IMR-90 (cell line): ENCODE measurements at regions of chr7 and their contacts with region 1.

Region 1: GRCh38 chr7:6290319-6290741 is 17.9 kb upstream of the CYTH3 start:
- DNase-seq: peak; percentile 18
- ATAC-seq: peak; percentile 37; the same call in 1 of the 2 replicates
- H3K4me3 ChIP-seq: no peak overlapping the region
- H3K27ac ChIP-seq: no peak overlapping the region
- H3K4me1 ChIP-seq: peaks cover 2% of the 10 kb centered on the region; the same call in 1 of the 2 replicates
- H3K27me3 ChIP-seq: no peaks in the 10 kb centered on the region
- CTCF ChIP-seq: no peak
- POLR2A ChIP-seq: no peak
- RAD21 ChIP-seq: no peak

Region 2: DNA sequence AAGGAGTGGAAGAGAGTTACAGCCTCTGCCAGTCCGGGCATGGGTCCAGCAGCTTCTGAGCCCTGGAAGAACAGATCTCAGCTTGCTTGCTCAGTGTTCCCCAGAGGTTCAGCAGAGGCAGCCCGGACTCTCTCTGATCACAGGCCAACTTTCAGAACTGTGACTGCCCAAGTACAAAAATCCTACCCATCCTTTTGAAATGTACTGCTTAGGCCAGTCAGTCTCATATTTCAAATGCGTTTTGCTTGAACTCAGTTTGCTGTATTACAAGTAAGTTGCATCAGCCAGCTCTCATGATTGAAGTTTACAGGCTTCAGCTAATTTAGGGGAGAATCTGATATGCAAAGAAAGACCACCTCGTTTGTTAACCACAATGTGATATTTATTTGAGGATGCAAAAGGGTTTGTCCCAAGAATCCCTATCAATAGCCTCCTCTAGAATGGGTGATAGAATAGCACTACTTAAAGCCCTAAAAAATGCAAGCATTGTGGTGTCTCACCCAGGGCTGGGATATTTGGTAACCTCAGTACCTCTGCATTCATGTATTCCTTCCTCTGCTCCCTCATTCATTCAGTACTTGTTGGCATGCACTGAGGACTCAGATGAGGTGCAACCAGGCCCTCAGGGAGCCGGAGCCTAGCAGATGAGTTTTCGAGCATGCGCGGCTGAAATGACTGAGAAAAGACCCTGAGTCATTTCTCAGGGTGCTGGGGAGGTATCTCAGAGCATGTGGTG is 274.2 kb before region 1 on chr7:
- CTCF ChIA-PET with region 1: no interaction called
- POLR2A ChIA-PET with region 1: no interaction called
- dilution Hi-C with region 1: no loop called
- in situ Hi-C with region 1: no loop called
- intact Hi-C with region 1: no loop called
- DNase-seq: peak; percentile 95
- ATAC-seq: peak; percentile 89
- H3K4me3 ChIP-seq: no peak overlapping the region
- H3K27ac ChIP-seq: peak overlapping the region; percentile 98
- H3K4me1 ChIP-seq: peaks cover 11% of the 10 kb centered on the region
- H3K27me3 ChIP-seq: no peaks in the 10 kb centered on the region
- CTCF ChIP-seq: no peak
- POLR2A ChIP-seq: no peak
- RAD21 ChIP-seq: no peak

Region 3: DNA sequence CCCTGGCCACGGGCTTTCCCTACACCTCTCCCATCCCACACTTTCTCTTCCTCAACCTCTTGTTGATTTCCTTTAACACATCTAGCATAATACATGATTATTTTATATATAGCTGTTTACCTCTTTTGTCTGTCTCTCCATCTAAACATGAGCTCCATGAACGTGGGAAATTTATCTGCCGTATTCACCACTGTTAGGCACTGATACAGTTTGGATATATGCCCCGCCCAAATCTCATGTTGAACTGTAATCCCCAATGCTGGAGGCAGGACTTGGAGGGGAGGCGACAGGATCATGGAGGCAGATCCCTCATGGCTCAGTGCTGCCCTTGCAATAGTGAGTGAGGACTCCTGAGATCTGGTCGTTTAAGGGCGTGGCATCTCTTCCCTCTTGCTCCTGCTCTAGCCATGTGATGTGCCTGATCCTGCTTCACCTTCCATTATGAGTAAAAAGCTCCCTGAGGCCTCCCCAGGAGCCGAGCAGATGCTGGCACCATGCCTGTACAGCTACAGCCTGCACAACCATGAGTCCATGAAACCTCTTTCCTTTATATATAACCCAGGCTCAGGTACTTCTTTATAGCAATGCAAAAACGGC is 23.5 kb before region 1 on chr7:
- CTCF ChIA-PET with region 1: no interaction called
- POLR2A ChIA-PET with region 1: interaction called, 25 read pairs
- dilution Hi-C with region 1: no loop called
- in situ Hi-C with region 1: no loop called
- intact Hi-C with region 1: no loop called
- DNase-seq: no peak
- ATAC-seq: no peak
- H3K4me3 ChIP-seq: no peak overlapping the region
- H3K27ac ChIP-seq: no peak overlapping the region
- H3K4me1 ChIP-seq: 0 out of 2 replicates have a peak, but pooled peaks cover 4% of the 10 kb centered on the region
- H3K27me3 ChIP-seq: no peaks in the 10 kb centered on the region
- CTCF ChIP-seq: no peak
- POLR2A ChIP-seq: no peak
- RAD21 ChIP-seq: no peak

Region 4: GRCh38 chr7:6385110-6385971 is 95.0 kb after region 1 on chr7:
- CTCF ChIA-PET with region 1: no interaction called
- POLR2A ChIA-PET with region 1: no interaction called
- dilution Hi-C with region 1: no loop called
- in situ Hi-C with region 1: no loop called
- intact Hi-C with region 1: no loop called
- DNase-seq: peak; percentile 97
- ATAC-seq: peak; percentile 89
- H3K4me3 ChIP-seq: no peak overlapping the region
- H3K27ac ChIP-seq: peak overlapping the region; percentile 42; the same call in 1 of the 2 replicates
- H3K4me1 ChIP-seq: peaks cover 17% of the 10 kb centered on the region
- H3K27me3 ChIP-seq: no peaks in the 10 kb centered on the region
- CTCF ChIP-seq: no peak
- POLR2A ChIP-seq: no peak
- RAD21 ChIP-seq: no peak

Region 5: GRCh38 chr7:6423942-6424701 is 133.8 kb after region 1 on chr7:
- CTCF ChIA-PET with region 1: no interaction called
- POLR2A ChIA-PET with region 1: no interaction called
- dilution Hi-C with region 1: no loop called
- in situ Hi-C with region 1: no loop called
- intact Hi-C with region 1: no loop called
- DNase-seq: no peak
- ATAC-seq: no peak
- H3K4me3 ChIP-seq: no peak overlapping the region
- H3K27ac ChIP-seq: no peak overlapping the region
- H3K4me1 ChIP-seq: no peaks in the 10 kb centered on the region
- H3K27me3 ChIP-seq: no peaks in the 10 kb centered on the region
- CTCF ChIP-seq: no peak
- POLR2A ChIP-seq: no peak
- RAD21 ChIP-seq: no peak

Region 6: DNA sequence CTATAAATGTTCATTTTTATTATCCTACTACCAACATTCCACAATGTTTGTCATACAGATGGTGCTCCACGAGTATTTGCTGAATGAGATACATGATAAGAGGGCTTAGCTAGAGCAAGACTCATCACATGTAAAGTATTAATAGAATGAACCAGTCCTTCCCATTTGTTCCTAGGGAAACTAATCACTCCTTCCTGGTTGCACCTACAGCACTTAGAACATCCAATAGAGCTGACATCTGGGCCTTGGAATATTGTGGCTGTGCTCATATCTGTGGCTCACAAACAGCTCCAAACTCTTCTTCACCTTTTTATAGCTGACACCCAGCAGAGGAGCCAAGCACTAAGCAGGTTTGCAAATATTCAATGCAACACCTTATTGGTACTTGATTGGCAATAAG is 800.1 kb after region 1 on chr7:
- CTCF ChIA-PET with region 1: no interaction called
- POLR2A ChIA-PET with region 1: no interaction called
- dilution Hi-C with region 1: no loop called
- in situ Hi-C with region 1: no loop called
- intact Hi-C with region 1: no loop called
- DNase-seq: no peak
- ATAC-seq: no peak
- H3K4me3 ChIP-seq: no peak overlapping the region
- H3K27ac ChIP-seq: no peak overlapping the region
- H3K4me1 ChIP-seq: no peaks in the 10 kb centered on the region
- H3K27me3 ChIP-seq: no peaks in the 10 kb centered on the region
- CTCF ChIP-seq: no peak
- POLR2A ChIP-seq: no peak
- RAD21 ChIP-seq: no peak